ENCODE measurements at regions of chr15 and their contacts with region 1.

Region 1: DNA sequence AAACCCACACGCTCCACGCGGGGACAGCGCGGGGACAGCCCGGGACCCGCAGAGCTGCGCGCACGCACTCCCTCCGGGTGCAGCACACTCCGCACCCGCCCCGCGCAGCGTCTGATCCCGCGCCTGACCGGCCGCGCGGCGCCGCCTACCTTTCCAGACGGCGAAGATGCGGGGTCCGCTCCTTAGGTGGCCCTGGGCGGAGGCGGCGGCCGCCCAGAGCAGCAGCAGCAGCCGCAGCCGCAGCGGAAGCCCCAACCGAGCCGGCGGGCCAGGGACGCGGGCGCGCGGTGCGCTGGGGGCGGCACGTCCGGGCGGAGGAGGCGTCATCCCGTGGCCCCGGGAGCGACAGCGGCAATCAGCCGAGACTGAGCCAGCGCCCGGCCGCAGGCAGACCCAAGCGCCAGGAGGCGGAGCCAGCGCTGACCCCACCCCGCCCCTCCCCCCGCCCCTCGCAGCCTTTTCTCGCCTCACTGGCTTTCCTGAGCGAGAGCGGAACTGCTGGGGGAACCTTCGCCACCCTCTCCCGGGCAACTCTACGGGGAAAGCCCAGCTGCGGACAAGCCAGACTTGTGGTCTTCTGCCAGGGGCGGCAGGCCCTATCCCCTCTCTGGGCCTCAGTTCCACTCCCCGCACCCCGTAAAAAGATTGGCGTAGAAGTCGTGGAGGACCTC is at the start of gene SEMA7A:
- DNase-seq: no peak
- H3K4me3 ChIP-seq: peak within 1 kb of the TSS; percentile 54 to 65
- H3K27ac ChIP-seq: peak within 1 kb of the TSS; percentile 74
- H3K4me1 ChIP-seq: peaks cover 16% of the 10 kb centered on the region
- H3K27me3 ChIP-seq: no peaks in the 10 kb centered on the region
- CTCF ChIP-seq: no peak
- POLR2A ChIP-seq: peak in 1 of 2 donors; percentile 28
- total RNA-seq, gene SEMA7A: 3.9 TPM

Region 2: DNA sequence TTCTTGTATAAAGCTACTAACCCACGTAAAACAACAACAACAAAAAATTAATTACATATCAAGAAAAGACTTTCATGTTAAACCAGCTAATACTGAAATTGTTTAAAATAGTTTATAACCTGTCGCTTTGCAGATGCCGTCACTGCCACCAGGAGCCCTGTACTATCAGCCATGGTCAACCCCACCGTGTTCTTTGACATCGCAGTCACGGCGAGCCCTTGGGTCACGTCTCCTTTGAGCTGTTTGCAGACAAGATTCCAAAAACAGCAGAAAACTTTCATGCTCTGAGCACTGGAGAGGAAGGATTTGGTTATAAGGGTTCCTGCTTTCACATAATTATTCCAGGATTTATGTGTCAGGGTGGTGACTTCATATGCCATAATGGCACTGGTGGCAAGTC is 72.3 kb before region 1 on chr15:
- intact Hi-C with region 1: no loop called
- DNase-seq: no peak
- H3K4me3 ChIP-seq: no peak overlapping the region
- H3K27ac ChIP-seq: no peak overlapping the region
- H3K4me1 ChIP-seq: peaks cover 12% of the 10 kb centered on the region
- H3K27me3 ChIP-seq: no peaks in the 10 kb centered on the region
- CTCF ChIP-seq: no peak
- POLR2A ChIP-seq: no peak

Region 3: GRCh38 chr15:74382004-74382816 is 51.5 kb before region 1 on chr15:
- intact Hi-C with region 1: loop called (anchors 2 kb)
- DNase-seq: no peak
- H3K4me3 ChIP-seq: no peak overlapping the region
- H3K27ac ChIP-seq: no peak overlapping the region
- H3K4me1 ChIP-seq: no peaks in the 10 kb centered on the region
- H3K27me3 ChIP-seq: no peaks in the 10 kb centered on the region
- CTCF ChIP-seq: peak; percentile 62 to 81 (median 80)
- POLR2A ChIP-seq: no peak